ENCODE measurements at regions of chr12 and their contacts with region 1.

Region 1: GRCh38 chr12:53451661-53452158 is at the start of gene PCBP2:
- DNase-seq: peak; percentile 93 to 99 (median 97)
- ATAC-seq: peak; percentile 93
- H3K4me3 ChIP-seq: peak within 1 kb of the TSS; percentile 86
- H3K4me3 Mint-ChIP-seq: peak within 1 kb of the TSS; percentile 98
- H3K27ac ChIP-seq: peak within 1 kb of the TSS; percentile 93
- H3K27ac Mint-ChIP-seq: peak within 1 kb of the TSS; percentile 89
- H3K4me1 ChIP-seq: peaks cover 16% of the 10 kb centered on the region
- H3K4me1 Mint-ChIP-seq: peaks cover 46% of the 10 kb centered on the region
- H3K27me3 ChIP-seq: no peaks in the 10 kb centered on the region
- H3K27me3 Mint-ChIP-seq: no peaks in the 10 kb centered on the region
- CTCF ChIP-seq: peak; percentile 87
- total RNA-seq, gene PCBP2: 1,331 to 1,359 TPM

Region 2: GRCh38 chr12:53441040-53441833 is 10.5 kb before region 1 on chr12 and contains the start of gene PRR13:
- CTCF ChIA-PET with region 1: interaction called, 8 read pairs
- POLR2A ChIA-PET with region 1: interaction called, 8 read pairs
- intact Hi-C with region 1: loop called in 1 of 2 experiments (anchors 1 kb)
- DNase-seq: peak; percentile 96 to 100 (median 98)
- ATAC-seq: peak; percentile 97
- H3K4me3 ChIP-seq: peak within 1 kb of the TSS; percentile 61
- H3K4me3 Mint-ChIP-seq: peak within 1 kb of the TSS; percentile 94
- H3K27ac ChIP-seq: peak within 1 kb of the TSS; percentile 59 to 84
- H3K27ac Mint-ChIP-seq: peak within 1 kb of the TSS; percentile 87
- H3K4me1 ChIP-seq: peaks cover 37% of the 10 kb centered on the region
- H3K4me1 Mint-ChIP-seq: peaks cover 48% of the 10 kb centered on the region
- H3K27me3 ChIP-seq: no peaks in the 10 kb centered on the region
- H3K27me3 Mint-ChIP-seq: no peaks in the 10 kb centered on the region
- CTCF ChIP-seq: no peak
- total RNA-seq, gene PRR13: 133 to 142 TPM

Measured in CD4-positive, alpha-beta T cell (primary cell).